ENCODE measurements at regions of chr20 and their contacts with region 1.

Region 1: GRCh38 chr20:39534846-39535245 is 572.7 kb downstream of the DHX35 start:
- DNase-seq: no peak
- H3K4me3 ChIP-seq: no peak overlapping the region
- H3K27ac ChIP-seq: no peak overlapping the region
- H3K4me1 ChIP-seq: peaks cover 23% of the 10 kb centered on the region
- CTCF ChIP-seq: no peak

Region 2: DNA sequence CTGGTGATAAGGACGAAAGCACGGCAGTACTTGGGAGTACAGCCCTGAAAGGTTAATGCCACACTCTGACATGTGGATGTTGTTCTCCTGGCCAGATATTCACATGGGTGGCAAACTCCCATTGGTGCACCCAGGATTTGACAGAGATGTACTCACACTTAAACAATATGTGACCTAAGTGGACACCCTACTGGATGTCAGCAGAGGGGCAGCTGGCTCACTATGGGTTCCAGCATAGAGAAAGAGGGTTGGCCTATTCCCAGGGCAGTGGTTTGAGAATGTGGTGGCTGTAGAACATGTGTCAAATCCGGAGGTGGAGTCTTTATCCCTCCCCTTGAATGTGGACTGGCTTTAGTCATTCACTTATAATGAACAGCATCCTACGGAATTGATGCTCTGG is 239.5 kb before region 1 on chr20:
- CTCF ChIA-PET with region 1: no interaction called
- POLR2A ChIA-PET with region 1: interaction called, 10 read pairs
- intact Hi-C with region 1: no loop called
- DNase-seq: no peak
- H3K4me3 ChIP-seq: no peak overlapping the region
- H3K27ac ChIP-seq: no peak overlapping the region
- H3K4me1 ChIP-seq: no peaks in the 10 kb centered on the region
- CTCF ChIP-seq: no peak